Activated CD8-positive, alpha-beta memory T cell treated with anti-CD3 and anti-CD28 coated beads, Interleukin-2, amount 10 ng/mL, durations not matched to agents 7 days and 5 days (primary cell): ENCODE measurements at regions of chr20 and their contacts with region 1.

Region 1: GRCh38 chr20:2172305-2173175 is 70.9 kb downstream of the STK35 start:
- DNase-seq: peak; percentile 73
- ATAC-seq: peak; percentile 70
- H3K4me3 Mint-ChIP-seq: no peak overlapping the region
- H3K27ac Mint-ChIP-seq: no peak overlapping the region
- H3K4me1 Mint-ChIP-seq: peaks cover 2% of the 10 kb centered on the region
- H3K27me3 Mint-ChIP-seq: peaks cover 9% of the 10 kb centered on the region

Region 2: GRCh38 chr20:1965520-1966351 is 206.8 kb before region 1 on chr20:
- CTCF ChIA-PET with region 1: interaction called, 46 read pairs
- DNase-seq: peak; percentile 80
- ATAC-seq: peak; percentile 84
- H3K4me3 Mint-ChIP-seq: peak overlapping the region; percentile 34
- H3K27ac Mint-ChIP-seq: no peak overlapping the region
- H3K4me1 Mint-ChIP-seq: peaks cover 8% of the 10 kb centered on the region
- H3K27me3 Mint-ChIP-seq: peaks cover 16% of the 10 kb centered on the region

Region 3: GRCh38 chr20:2005831-2006426 is 166.6 kb before region 1 on chr20:
- CTCF ChIA-PET with region 1: interaction called, 62 read pairs
- DNase-seq: peak; percentile 72
- ATAC-seq: peak; percentile 33
- H3K4me3 Mint-ChIP-seq: no peak overlapping the region
- H3K27ac Mint-ChIP-seq: no peak overlapping the region
- H3K4me1 Mint-ChIP-seq: no peaks in the 10 kb centered on the region
- H3K27me3 Mint-ChIP-seq: peaks cover 6% of the 10 kb centered on the region